ENCODE measurements at regions of chrX and their contacts with region 1.

Region 1: GRCh38 chrX:153470435-153471363 is at the start of gene HAUS7:
- DNase-seq: peak in 1 of 2 donors; percentile 94
- H3K4me3 ChIP-seq: peak within 1 kb of the TSS; percentile 51
- H3K27ac ChIP-seq: peak within 1 kb of the TSS; percentile 65
- H3K4me1 ChIP-seq: peaks cover 15% of the 10 kb centered on the region
- H3K27me3 ChIP-seq: no peaks in the 10 kb centered on the region
- CTCF ChIP-seq: peak; percentile 10 to 61 (median 39)
- POLR2A ChIP-seq: no peak
- total RNA-seq, gene HAUS7: 17.7 TPM

Region 2: GRCh38 chrX:153494541-153495361 is 24.1 kb after region 1 on chrX and contains the start of gene BGN:
- intact Hi-C with region 1: loop called (anchors 2 kb)
- DNase-seq: no peak
- H3K4me3 ChIP-seq: peak within 1 kb of the TSS; percentile 43 to 44
- H3K27ac ChIP-seq: peak within 1 kb of the TSS; percentile 72
- H3K4me1 ChIP-seq: peaks cover 47% of the 10 kb centered on the region
- H3K27me3 ChIP-seq: no peaks in the 10 kb centered on the region
- CTCF ChIP-seq: peak in 1 of 3 experiments; percentile 44
- POLR2A ChIP-seq: no peak
- total RNA-seq, gene BGN: 106 TPM

Region 3: GRCh38 chrX:153507484-153508178 is 36.9 kb after region 1 on chrX:
- intact Hi-C with region 1: loop called (anchors 5 kb)
- DNase-seq: no peak
- H3K4me3 ChIP-seq: no peak overlapping the region
- H3K27ac ChIP-seq: no peak overlapping the region
- H3K4me1 ChIP-seq: no peaks in the 10 kb centered on the region
- H3K27me3 ChIP-seq: no peaks in the 10 kb centered on the region
- CTCF ChIP-seq: peak; percentile 68 to 84 (median 72)
- POLR2A ChIP-seq: no peak

Measured in vagina (tissue), 2 donors.